Calu3 (cell line): ENCODE measurements at regions of chr5 and their contacts with region 1.

Region 1: GRCh38 chr5:90606539-90606938 is 47.9 kb downstream of the ADGRV1 start:
- DNase-seq: peak; percentile 7
- H3K4me3 Mint-ChIP-seq: no peak overlapping the region
- H3K27ac Mint-ChIP-seq: no peak overlapping the region
- H3K4me1 Mint-ChIP-seq: peaks cover 10% of the 10 kb centered on the region
- H3K27me3 Mint-ChIP-seq: peaks cover 49% of the 10 kb centered on the region
- CTCF ChIP-seq: peak; percentile 50

Region 2: GRCh38 chr5:90440644-90441043 is 165.9 kb before region 1 on chr5:
- CTCF ChIA-PET with region 1: interaction called, 10 read pairs
- intact Hi-C with region 1: loop called (anchors 1 kb)
- DNase-seq: no peak
- H3K4me3 Mint-ChIP-seq: no peak overlapping the region
- H3K27ac Mint-ChIP-seq: no peak overlapping the region
- H3K4me1 Mint-ChIP-seq: peaks cover 20% of the 10 kb centered on the region
- H3K27me3 Mint-ChIP-seq: peaks cover 19% of the 10 kb centered on the region
- CTCF ChIP-seq: no peak